ENCODE measurements at regions of chr2 and their contacts with region 1.

Region 1: DNA sequence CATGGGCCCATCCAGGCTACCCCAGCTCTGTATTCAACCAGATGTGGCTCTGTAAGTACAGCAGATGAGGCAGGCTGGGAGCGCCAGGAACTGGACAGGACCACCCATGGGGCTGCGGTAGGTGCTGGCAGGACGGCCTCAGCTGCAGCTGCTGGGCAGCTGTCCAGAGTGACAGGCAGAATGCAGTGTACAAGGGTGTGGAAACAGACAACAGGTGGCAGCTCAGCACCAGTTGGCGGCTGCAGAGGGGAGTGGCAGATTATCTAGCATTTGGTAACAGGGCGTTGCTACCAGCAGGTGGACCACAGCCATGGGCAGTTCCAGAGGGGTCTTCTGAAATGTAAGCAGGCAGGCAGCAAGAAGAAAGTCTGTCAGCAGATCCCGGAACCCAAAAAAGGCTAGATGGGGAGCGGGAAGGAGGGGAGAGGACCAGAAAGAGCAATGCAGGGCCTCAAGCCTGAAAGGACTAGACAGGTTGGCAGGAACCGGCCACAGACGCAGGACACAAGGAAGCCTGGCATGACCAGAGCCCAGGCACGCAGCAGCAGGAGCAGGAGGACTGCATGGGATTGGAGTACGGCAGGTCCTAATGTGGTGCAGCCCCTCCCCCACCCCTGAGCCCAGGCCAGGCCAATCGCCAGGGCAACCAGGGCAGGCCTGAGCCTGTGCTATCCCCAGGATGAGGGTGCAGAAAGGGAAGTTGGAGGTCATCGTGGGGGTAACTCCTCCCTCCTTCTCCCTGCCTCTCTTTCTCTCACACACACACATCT is 24.7 kb downstream of the PKDCC start:
- DNase-seq: no peak
- ATAC-seq: peak; percentile 27 to 55 (median 38)
- H3K4me3 ChIP-seq: no peak overlapping the region
- H3K27ac ChIP-seq: no peak overlapping the region
- H3K4me1 ChIP-seq: no peaks in the 10 kb centered on the region
- H3K27me3 ChIP-seq: no peaks in the 10 kb centered on the region
- CTCF ChIP-seq: no peak
- POLR2A ChIP-seq: no peak

Region 2: DNA sequence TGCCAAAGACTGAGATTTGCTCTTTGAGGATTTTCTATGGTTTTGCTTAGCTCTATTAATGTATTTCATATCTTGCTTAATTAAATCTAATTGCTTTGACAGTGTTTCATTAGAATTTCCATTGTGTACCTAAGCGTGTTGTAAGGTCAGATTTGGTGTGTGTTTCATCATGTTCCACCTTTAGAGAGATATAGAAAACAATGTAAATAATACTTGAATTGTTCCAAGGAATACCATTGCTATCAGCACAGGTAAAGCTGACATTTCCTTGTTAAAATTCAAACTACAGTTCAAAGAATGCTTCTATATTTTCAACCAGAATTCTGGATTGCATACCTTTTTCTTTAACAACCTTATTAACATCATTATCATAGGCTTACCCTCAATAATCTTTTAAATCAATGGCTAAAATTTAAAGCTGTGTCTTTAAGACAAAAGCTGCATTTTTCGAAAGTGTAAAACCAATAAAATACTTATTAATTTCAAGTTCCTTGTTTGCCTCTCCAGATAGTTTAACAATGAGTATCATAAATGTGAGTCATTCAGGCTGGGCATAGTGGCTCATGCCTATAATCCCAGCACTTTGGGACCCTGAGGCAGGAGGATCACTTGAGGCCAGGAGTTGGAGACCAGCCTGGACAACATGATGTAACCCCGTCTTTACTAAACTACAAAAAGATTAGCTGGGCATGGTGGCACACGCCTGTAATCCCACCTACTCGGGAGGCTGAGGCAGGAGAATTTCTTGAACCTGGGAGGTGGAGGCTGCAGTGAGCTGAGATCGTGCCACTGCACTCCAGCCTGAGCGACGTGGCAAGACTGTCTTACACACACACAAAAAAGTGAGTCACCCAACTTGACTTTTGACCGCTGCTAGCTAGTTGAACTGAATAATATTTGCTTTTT is 212.7 kb before region 1 on chr2:
- intact Hi-C with region 1: no loop called
- DNase-seq: peak in 1 of 3 donors; percentile 37
- ATAC-seq: peak in 2 of 4 donors; percentile 55 to 74
- H3K4me3 ChIP-seq: no peak overlapping the region
- H3K27ac ChIP-seq: no peak overlapping the region
- H3K4me1 ChIP-seq: peaks cover 0 to 9% (median 4%) of the 10 kb centered on the region in 4 donors
- H3K27me3 ChIP-seq: no peaks in the 10 kb centered on the region
- CTCF ChIP-seq: no peak
- POLR2A ChIP-seq: no peak

Region 3: GRCh38 chr2:41879235-41879916 is 193.2 kb before region 1 on chr2:
- intact Hi-C with region 1: loop called in 1 of 2 experiments (anchors 5 kb)
- DNase-seq: no peak
- ATAC-seq: no peak
- H3K4me3 ChIP-seq: no peak overlapping the region
- H3K27ac ChIP-seq: peak overlapping the region in 2 of 3 donors; percentile 93
- H3K4me1 ChIP-seq: peaks cover 0 to 23% (median 0%) of the 10 kb centered on the region in 4 donors
- H3K27me3 ChIP-seq: no peaks in the 10 kb centered on the region
- CTCF ChIP-seq: no peak
- POLR2A ChIP-seq: no peak

Region 4: GRCh38 chr2:42010810-42011209 is 61.7 kb before region 1 on chr2:
- intact Hi-C with region 1: no loop called
- DNase-seq: no peak
- ATAC-seq: peak in 1 of 4 donors; percentile 7
- H3K4me3 ChIP-seq: no peak overlapping the region
- H3K27ac ChIP-seq: no peak overlapping the region
- H3K4me1 ChIP-seq: no peaks in the 10 kb centered on the region
- H3K27me3 ChIP-seq: no peaks in the 10 kb centered on the region
- CTCF ChIP-seq: no peak
- POLR2A ChIP-seq: no peak

Measured in right lobe of liver (tissue), 6 donors.